ENCODE measurements at regions of chr4 and their contacts with region 1.

Region 1: GRCh38 chr4:118981839-118982381 is 93.3 kb downstream of the SYNPO2 start:
- DNase-seq: no peak
- H3K4me3 ChIP-seq: peak overlapping the region in 1 of 4 donors; percentile 15
- H3K27ac ChIP-seq: peak overlapping the region in 3 of 4 donors; percentile 51 to 61 (median 61)
- H3K4me1 ChIP-seq: peaks cover 0 to 20% (median 0%) of the 10 kb centered on the region in 3 donors
- H3K27me3 ChIP-seq: no peaks in the 10 kb centered on the region
- CTCF ChIP-seq: peak; percentile 39 to 87 (median 74)
- POLR2A ChIP-seq: no peak

Region 2: GRCh38 chr4:119299741-119300100 is 317.8 kb after region 1 on chr4:
- intact Hi-C with region 1: loop called (anchors 10 kb)
- DNase-seq: no peak
- H3K4me3 ChIP-seq: peak overlapping the region; percentile 69 to 89 (median 73)
- H3K27ac ChIP-seq: peak overlapping the region; percentile 94 to 99 (median 96)
- H3K4me1 ChIP-seq: peaks cover 0 to 74% (median 24%) of the 10 kb centered on the region in 3 donors
- H3K27me3 ChIP-seq: no peaks in the 10 kb centered on the region
- CTCF ChIP-seq: no peak
- POLR2A ChIP-seq: no peak